CD4-positive, alpha-beta memory T cell (primary cell): ENCODE measurements at regions of chr2 and their contacts with region 1.

Region 1: DNA sequence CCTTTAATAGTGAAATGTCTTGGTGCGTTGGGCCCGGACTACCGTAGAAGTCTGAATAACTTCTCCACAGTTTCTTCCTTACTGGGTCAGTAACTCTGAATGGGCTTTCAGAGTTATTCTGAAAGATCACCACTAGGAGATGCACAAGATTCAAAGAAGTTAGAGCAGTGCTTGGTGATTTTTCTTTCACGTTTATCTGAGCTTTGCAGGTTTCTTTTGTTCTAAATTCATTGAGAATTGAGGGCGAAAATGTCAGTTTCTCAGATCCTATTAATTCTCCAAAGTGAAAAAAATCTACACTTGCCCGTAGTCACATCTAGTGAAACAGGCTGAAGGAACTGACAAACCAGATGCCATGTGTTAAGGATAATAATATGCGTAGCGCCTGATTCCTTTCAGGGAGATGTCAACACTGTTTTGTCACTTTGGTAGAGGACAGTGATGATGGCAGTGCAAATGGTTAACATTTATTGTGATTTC is 70.1 kb downstream of the QPCT start:
- DNase-seq: peak in 4 of 5 donors; percentile 53 to 57 (median 57)
- H3K4me3 ChIP-seq: no peak overlapping the region
- H3K4me3 Mint-ChIP-seq: peak overlapping the region in 1 of 8 donors; percentile 27
- H3K27ac ChIP-seq: no peak overlapping the region
- H3K27ac Mint-ChIP-seq: no peak overlapping the region
- H3K4me1 ChIP-seq: peaks cover 7% of the 10 kb centered on the region
- H3K4me1 Mint-ChIP-seq: peaks cover 6 to 19% (median 13%) of the 10 kb centered on the region in 4 donors
- H3K27me3 ChIP-seq: no peaks in the 10 kb centered on the region
- H3K27me3 Mint-ChIP-seq: peaks cover 2 to 4% of the 10 kb centered on the region in 2 donors

Region 2: GRCh38 chr2:37283207-37283606 is 131.3 kb before region 1 on chr2:
- CTCF ChIA-PET with region 1: no interaction called
- POLR2A ChIA-PET with region 1: no interaction called
- intact Hi-C with region 1: no loop called
- DNase-seq: no peak
- H3K4me3 ChIP-seq: no peak overlapping the region
- H3K4me3 Mint-ChIP-seq: no peak overlapping the region
- H3K27ac ChIP-seq: no peak overlapping the region
- H3K27ac Mint-ChIP-seq: peak overlapping the region in 1 of 7 donors; percentile 25
- H3K4me1 ChIP-seq: no peaks in the 10 kb centered on the region
- H3K4me1 Mint-ChIP-seq: no peaks in the 10 kb centered on the region
- H3K27me3 ChIP-seq: no peaks in the 10 kb centered on the region
- H3K27me3 Mint-ChIP-seq: no peaks in the 10 kb centered on the region

Region 3: GRCh38 chr2:37344453-37345361 is 69.8 kb before region 1 on chr2 and contains the start of gene QPCT:
- CTCF ChIA-PET with region 1: no interaction called
- POLR2A ChIA-PET with region 1: no interaction called
- intact Hi-C with region 1: no loop called
- DNase-seq: peak; percentile 36 to 80 (median 50)
- H3K4me3 ChIP-seq: peak within 1 kb of the TSS; percentile 27 to 51
- H3K4me3 Mint-ChIP-seq: peak within 1 kb of the TSS; percentile 62 to 88 (median 84)
- H3K27ac ChIP-seq: no peak within 1 kb of the TSS
- H3K27ac Mint-ChIP-seq: peak within 1 kb of the TSS in 6 of 7 donors; percentile 24 to 75 (median 49)
- H3K4me1 ChIP-seq: peaks cover 12% of the 10 kb centered on the region
- H3K4me1 Mint-ChIP-seq: peaks cover 7 to 12% (median 10%) of the 10 kb centered on the region in 4 donors
- H3K27me3 ChIP-seq: no peaks in the 10 kb centered on the region
- H3K27me3 Mint-ChIP-seq: peaks cover 2 to 5% of the 10 kb centered on the region in 2 donors
- total RNA-seq, gene QPCT: 1.2 to 1.4 TPM

Region 4: GRCh38 chr2:37365669-37366068 is 48.8 kb before region 1 on chr2:
- CTCF ChIA-PET with region 1: no interaction called
- POLR2A ChIA-PET with region 1: no interaction called
- intact Hi-C with region 1: no loop called
- DNase-seq: no peak
- H3K4me3 ChIP-seq: no peak overlapping the region
- H3K4me3 Mint-ChIP-seq: no peak overlapping the region
- H3K27ac ChIP-seq: no peak overlapping the region
- H3K27ac Mint-ChIP-seq: no peak overlapping the region
- H3K4me1 ChIP-seq: peaks cover 33% of the 10 kb centered on the region
- H3K4me1 Mint-ChIP-seq: peaks cover 0 to 16% (median 8%) of the 10 kb centered on the region in 4 donors
- H3K27me3 ChIP-seq: no peaks in the 10 kb centered on the region
- H3K27me3 Mint-ChIP-seq: peaks cover 11 to 19% of the 10 kb centered on the region in 2 donors

Region 5: GRCh38 chr2:37529830-37530415 is 115.4 kb after region 1 on chr2:
- CTCF ChIA-PET with region 1: interaction called, 20 read pairs
- POLR2A ChIA-PET with region 1: no interaction called
- intact Hi-C with region 1: no loop called
- DNase-seq: no peak
- H3K4me3 ChIP-seq: no peak overlapping the region
- H3K4me3 Mint-ChIP-seq: no peak overlapping the region
- H3K27ac ChIP-seq: no peak overlapping the region
- H3K27ac Mint-ChIP-seq: no peak overlapping the region
- H3K4me1 ChIP-seq: no peaks in the 10 kb centered on the region
- H3K4me1 Mint-ChIP-seq: no peaks in the 10 kb centered on the region
- H3K27me3 ChIP-seq: no peaks in the 10 kb centered on the region
- H3K27me3 Mint-ChIP-seq: peaks cover 0 to 1% of the 10 kb centered on the region in 2 donors

Region 6: GRCh38 chr2:37563375-37564015 is 149.0 kb after region 1 on chr2:
- CTCF ChIA-PET with region 1: no interaction called
- POLR2A ChIA-PET with region 1: no interaction called
- intact Hi-C with region 1: no loop called
- DNase-seq: no peak
- H3K4me3 ChIP-seq: no peak overlapping the region
- H3K4me3 Mint-ChIP-seq: no peak overlapping the region
- H3K27ac ChIP-seq: no peak overlapping the region
- H3K27ac Mint-ChIP-seq: no peak overlapping the region
- H3K4me1 ChIP-seq: peaks cover 4% of the 10 kb centered on the region
- H3K4me1 Mint-ChIP-seq: peaks cover 9 to 26% (median 11%) of the 10 kb centered on the region in 4 donors
- H3K27me3 ChIP-seq: no peaks in the 10 kb centered on the region
- H3K27me3 Mint-ChIP-seq: no peaks in the 10 kb centered on the region

Region 7: DNA sequence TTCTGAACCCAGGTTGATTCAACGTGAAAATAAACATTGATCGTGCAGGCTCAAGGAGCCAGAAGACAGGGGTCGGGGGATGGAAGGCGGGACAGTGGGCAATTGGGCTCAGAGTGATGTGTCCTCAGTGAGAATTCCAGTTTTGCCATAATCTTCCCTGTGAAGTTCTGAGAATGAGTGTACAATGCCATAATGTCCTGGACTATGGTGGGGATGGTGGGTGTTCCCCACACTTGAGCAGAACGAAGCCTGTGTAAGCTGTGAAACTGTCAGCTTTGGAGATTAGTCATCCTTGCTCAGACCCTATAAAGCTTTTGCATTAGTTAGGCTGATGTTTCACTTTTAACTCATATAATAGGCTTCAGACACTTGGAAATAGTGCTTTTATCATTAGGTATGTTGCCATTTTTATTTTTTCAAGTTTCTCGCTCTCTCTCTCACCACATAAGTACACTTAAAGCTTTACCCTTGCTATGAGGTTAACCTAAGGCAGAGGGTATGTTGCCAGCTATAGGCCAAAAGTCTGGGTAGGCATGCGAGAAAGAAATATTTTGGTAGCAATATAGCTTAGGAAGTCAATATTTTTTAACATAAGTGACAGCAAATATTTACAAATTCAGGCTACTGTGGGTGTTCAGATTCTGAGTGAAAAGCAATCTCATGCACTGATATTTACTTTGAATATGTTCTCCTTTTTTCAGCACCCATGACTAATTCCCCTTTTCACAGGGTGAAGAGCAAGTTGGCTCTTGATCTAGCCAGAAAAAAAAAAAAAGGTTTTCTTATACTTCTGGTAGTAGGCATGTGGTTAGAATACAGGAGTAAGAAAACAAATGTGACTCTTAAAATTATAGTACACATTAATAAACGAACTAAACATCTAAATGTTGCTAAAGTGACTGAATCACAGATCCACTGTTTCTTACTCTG is 209.7 kb after region 1 on chr2:
- CTCF ChIA-PET with region 1: interaction called, 14 read pairs
- POLR2A ChIA-PET with region 1: interaction called, 4 read pairs
- intact Hi-C with region 1: no loop called
- DNase-seq: peak in 2 of 5 donors; percentile 20 to 43
- H3K4me3 ChIP-seq: peak overlapping the region in 1 of 2 donors; percentile 36
- H3K4me3 Mint-ChIP-seq: peak overlapping the region; percentile 1 to 83 (median 78)
- H3K27ac ChIP-seq: peak overlapping the region; percentile 66
- H3K27ac Mint-ChIP-seq: peak overlapping the region; percentile 87 to 97 (median 91)
- H3K4me1 ChIP-seq: peaks cover 75% of the 10 kb centered on the region
- H3K4me1 Mint-ChIP-seq: peaks cover 52 to 84% (median 68%) of the 10 kb centered on the region in 4 donors
- H3K27me3 ChIP-seq: no peaks in the 10 kb centered on the region
- H3K27me3 Mint-ChIP-seq: no peaks in the 10 kb centered on the region

Region 8: GRCh38 chr2:37672104-37672869 is 257.8 kb after region 1 on chr2:
- CTCF ChIA-PET with region 1: interaction called, 11 read pairs
- POLR2A ChIA-PET with region 1: interaction called, 12 read pairs
- intact Hi-C with region 1: no loop called
- DNase-seq: peak; percentile 56 to 78 (median 70)
- H3K4me3 ChIP-seq: peak overlapping the region; percentile 65 to 89
- H3K4me3 Mint-ChIP-seq: peak overlapping the region; percentile 83 to 97 (median 90)
- H3K27ac ChIP-seq: peak overlapping the region; percentile 85
- H3K27ac Mint-ChIP-seq: peak overlapping the region; percentile 87 to 95 (median 90)
- H3K4me1 ChIP-seq: peaks cover 34% of the 10 kb centered on the region
- H3K4me1 Mint-ChIP-seq: peaks cover 26 to 57% (median 42%) of the 10 kb centered on the region in 4 donors
- H3K27me3 ChIP-seq: no peaks in the 10 kb centered on the region
- H3K27me3 Mint-ChIP-seq: no peaks in the 10 kb centered on the region

Region 9: DNA sequence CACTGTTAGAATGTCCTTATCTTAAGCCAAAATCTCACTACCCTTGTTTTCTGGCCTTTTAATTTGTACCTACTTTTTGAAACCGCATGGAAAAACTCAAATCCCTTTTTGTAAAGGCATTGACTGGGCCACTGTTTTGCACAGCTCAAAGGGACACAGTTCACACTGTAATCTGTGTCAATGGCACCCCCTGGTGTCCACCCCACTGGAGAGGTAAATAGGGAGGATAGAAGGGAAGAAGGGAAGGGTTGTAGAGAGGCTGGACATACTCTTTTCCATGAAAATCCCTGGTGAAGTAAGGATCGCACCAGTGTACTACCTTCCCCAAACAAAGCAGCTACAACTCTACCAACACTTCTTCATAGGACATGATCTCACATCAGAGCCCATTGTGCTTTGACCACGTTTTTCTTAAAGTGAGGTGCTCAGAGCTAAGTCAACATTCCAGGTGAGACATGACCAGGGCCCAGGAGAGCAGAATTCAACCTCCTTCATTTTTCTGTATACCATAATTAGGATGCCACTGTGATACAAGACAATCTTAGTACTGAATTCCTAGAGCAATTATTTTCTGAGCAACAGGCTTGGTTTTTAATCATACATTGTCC is 418.2 kb after region 1 on chr2:
- CTCF ChIA-PET with region 1: interaction called, 306 read pairs
- POLR2A ChIA-PET with region 1: interaction called, 43 read pairs
- intact Hi-C with region 1: loop called (anchors 1 kb)
- DNase-seq: peak; percentile 69 to 75 (median 74)
- H3K4me3 ChIP-seq: no peak overlapping the region
- H3K4me3 Mint-ChIP-seq: no peak overlapping the region
- H3K27ac ChIP-seq: no peak overlapping the region
- H3K27ac Mint-ChIP-seq: peak overlapping the region in 2 of 7 donors; percentile 16 to 48
- H3K4me1 ChIP-seq: peaks cover 16% of the 10 kb centered on the region
- H3K4me1 Mint-ChIP-seq: peaks cover 5 to 26% (median 11%) of the 10 kb centered on the region in 4 donors
- H3K27me3 ChIP-seq: no peaks in the 10 kb centered on the region
- H3K27me3 Mint-ChIP-seq: no peaks in the 10 kb centered on the region